ENCODE measurements at regions of chr5 and their contacts with region 1.

Region 1: DNA sequence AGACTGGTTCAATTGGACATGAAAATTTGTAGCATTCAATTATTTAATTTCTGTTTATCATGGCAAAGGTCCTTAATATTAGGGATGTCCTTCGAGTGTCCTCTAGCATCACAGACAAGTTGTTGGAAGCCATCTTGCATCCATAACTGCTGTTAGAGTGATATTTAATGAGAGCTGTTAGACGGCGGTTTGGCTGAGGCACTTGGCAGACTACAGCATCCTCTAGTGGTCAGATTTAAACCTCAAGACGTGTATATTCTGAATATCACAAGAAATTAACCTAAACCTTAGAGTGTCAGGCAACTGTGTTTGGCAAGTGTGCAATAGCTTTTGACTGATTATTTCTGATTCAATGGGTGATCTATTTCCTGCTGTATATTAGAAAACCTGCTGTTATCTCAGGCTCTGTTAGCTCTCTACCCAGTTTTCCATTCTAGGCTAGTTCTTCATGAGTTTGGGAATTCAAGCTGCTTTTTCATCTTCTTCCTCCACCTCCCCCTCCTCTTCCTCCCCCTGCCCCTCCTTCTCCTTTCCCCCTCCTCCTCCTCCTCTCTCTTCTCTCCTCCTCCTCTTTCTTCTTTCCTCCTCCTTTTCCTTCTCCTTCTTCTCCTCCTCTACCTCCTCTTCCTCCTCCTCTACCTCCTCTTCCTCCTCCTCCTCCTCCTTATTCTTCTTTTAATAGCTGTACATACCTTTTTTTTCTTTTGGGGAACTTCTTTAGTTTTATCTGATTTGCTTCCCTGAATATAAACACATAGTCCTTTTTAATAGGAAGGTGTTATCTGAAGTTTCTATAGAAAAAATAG is 8.6 kb downstream of the SPINK1 start:
- DNase-seq: peak; percentile 45
- H3K4me3 Mint-ChIP-seq: no peak overlapping the region
- H3K27ac Mint-ChIP-seq: peak overlapping the region; percentile 16
- H3K4me1 Mint-ChIP-seq: peaks cover 18% of the 10 kb centered on the region
- H3K27me3 Mint-ChIP-seq: no peaks in the 10 kb centered on the region
- CTCF ChIP-seq: peak; percentile 85

Region 2: GRCh38 chr5:147690595-147690994 is 132.3 kb before region 1 on chr5:
- CTCF ChIA-PET with region 1: interaction called, 11 read pairs
- intact Hi-C with region 1: loop called (anchors 5 kb)
- DNase-seq: peak; percentile 55
- H3K4me3 Mint-ChIP-seq: no peak overlapping the region
- H3K27ac Mint-ChIP-seq: no peak overlapping the region
- H3K4me1 Mint-ChIP-seq: no peaks in the 10 kb centered on the region
- H3K27me3 Mint-ChIP-seq: no peaks in the 10 kb centered on the region
- CTCF ChIP-seq: peak; percentile 69